Right ventricle myocardium inferior (tissue), 1 donor: ENCODE measurements at regions of chr15 and their contacts with region 1.

Region 1: GRCh38 chr15:50003786-50004334 is 115.2 kb downstream of the ATP8B4 start:
- DNase-seq: peak; percentile 92
- ATAC-seq: peak; percentile 100

Region 2: GRCh38 chr15:49235446-49236124 is 768.3 kb before region 1 on chr15:
- intact Hi-C with region 1: loop called (anchors 5 kb)
- DNase-seq: no peak
- ATAC-seq: peak; percentile 85

Region 3: GRCh38 chr15:49421991-49422390 is 581.9 kb before region 1 on chr15:
- intact Hi-C with region 1: loop called (anchors 10 kb)
- DNase-seq: peak; percentile 82
- ATAC-seq: peak; percentile 68

Region 4: GRCh38 chr15:49620658-49621368 is 383.0 kb before region 1 on chr15 and contains the starts of genes DTWD1 and FAM227B:
- intact Hi-C with region 1: loop called (anchors 10 kb)
- DNase-seq: peak; percentile 98
- ATAC-seq: peak; percentile 100
- total RNA-seq, gene DTWD1: 22.1 TPM
- total RNA-seq, gene FAM227B: 19.8 TPM

Region 5: GRCh38 chr15:49876401-49877038 is 127.3 kb before region 1 on chr15:
- intact Hi-C with region 1: loop called (anchors 1 kb)
- DNase-seq: no peak
- ATAC-seq: peak; percentile 89

Region 6: DNA sequence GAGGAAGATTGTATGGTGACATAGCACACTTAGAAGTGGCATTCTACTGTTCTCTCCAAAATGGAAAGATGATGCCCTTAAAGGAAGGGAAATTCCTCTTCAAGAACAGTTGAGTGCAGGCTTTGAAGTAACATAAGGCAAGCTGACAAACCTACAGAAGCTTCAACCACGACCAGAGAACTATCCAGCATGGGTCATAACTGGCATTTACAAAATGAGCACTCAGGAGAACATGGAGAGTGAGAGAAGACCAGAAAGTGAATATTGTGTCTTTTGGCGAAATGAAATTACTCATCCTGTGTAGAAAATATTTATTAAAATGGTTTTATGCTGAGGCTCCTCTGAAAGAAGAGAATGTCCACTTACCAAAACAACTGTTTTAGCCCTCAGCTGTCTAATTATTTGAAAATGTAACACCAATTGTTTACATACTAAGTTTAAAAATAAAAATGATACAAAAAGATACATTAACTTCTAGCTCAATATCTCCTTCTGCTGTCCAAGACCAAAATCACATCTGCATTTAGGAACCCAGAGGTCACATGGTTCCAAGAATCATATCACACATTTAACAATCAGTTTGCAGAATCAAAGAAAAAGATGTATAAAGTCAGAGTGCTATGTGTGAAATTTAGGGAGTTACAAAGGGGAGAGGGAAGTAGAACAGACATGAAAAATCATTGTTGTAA is 101.7 kb before region 1 on chr15:
- intact Hi-C with region 1: loop called (anchors 10 kb)
- DNase-seq: no peak
- ATAC-seq: no peak

Region 7: GRCh38 chr15:49979705-49980382 is 24.0 kb before region 1 on chr15:
- intact Hi-C with region 1: no loop called
- DNase-seq: no peak
- ATAC-seq: no peak

Region 8: GRCh38 chr15:50051803-50052419 is 48.1 kb after region 1 on chr15:
- intact Hi-C with region 1: loop called (anchors 5 kb)
- DNase-seq: no peak
- ATAC-seq: no peak

Region 9: DNA sequence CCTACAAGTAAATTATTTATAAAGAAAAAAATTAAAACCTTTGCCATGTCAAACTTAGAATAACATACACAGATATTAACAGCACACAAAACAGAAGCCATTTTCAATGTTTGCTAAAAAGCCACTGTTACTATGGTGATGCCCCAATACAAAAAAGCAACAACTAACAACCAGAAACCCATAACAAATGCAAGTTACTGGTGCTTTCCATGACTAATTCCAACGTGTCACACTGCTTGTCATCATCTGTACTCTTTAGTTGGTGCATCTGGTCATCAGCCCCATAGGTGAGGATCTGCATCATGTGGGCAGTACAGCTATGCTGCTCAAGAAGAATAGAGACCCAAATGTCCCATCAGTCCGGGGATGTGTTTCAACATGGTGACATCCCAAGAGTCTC is 62.3 kb after region 1 on chr15:
- intact Hi-C with region 1: no loop called
- DNase-seq: no peak
- ATAC-seq: no peak